ENCODE measurements at regions of chr1 and their contacts with region 1.

Region 1: GRCh38 chr1:78176448-78176847 is 130.7 kb downstream of the GIPC2 start:
- DNase-seq: peak; percentile 90
- ATAC-seq: peak; percentile 42
- H3K4me3 ChIP-seq: no peak overlapping the region
- H3K27ac ChIP-seq: peak overlapping the region; percentile 64
- H3K4me1 ChIP-seq: peaks cover 28% of the 10 kb centered on the region
- H3K27me3 ChIP-seq: no peaks in the 10 kb centered on the region
- CTCF ChIP-seq: no peak

Region 2: DNA sequence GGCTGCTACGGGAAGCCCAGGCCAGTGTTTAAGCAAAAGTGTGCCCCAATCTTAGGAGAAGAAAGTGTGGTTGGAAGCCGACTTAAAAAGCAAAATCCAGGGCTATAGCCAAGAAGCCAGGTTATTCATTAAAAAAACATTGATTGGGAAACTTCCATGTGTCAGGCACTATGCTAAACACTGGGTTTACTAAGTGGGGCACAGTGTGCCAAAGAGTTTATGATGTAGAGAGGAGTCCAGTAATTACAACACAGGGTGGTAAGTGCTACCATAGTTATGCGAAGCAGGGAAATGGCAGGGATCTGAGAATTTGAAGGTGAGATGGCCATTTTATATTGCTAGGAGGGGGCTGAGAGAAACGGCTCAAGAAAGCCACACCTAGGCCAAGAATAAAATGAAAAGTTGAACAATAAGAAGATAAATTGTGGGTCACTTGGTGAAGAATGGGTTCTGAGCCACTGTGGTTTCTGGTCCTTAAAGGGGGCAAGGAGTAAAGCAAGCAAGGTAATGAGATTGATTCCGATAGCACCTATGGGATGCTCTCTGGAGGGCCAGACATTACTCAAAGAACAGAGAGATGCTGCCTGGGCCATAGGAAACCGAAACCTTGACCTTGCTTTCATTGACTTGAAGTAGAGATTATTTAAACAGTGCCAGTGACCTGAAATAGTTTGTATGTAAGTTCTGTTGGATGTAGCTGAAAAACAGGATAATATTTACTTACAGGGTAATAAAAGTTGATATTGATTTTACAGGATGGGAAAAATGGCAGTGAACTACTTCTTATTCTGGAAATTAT is 47.2 kb after region 1 on chr1:
- CTCF ChIA-PET with region 1: no interaction called
- POLR2A ChIA-PET with region 1: no interaction called
- intact Hi-C with region 1: loop called (anchors 5 kb)
- DNase-seq: peak; percentile 15
- ATAC-seq: no peak
- H3K4me3 ChIP-seq: no peak overlapping the region
- H3K27ac ChIP-seq: no peak overlapping the region
- H3K4me1 ChIP-seq: peaks cover 14% of the 10 kb centered on the region
- H3K27me3 ChIP-seq: no peaks in the 10 kb centered on the region
- CTCF ChIP-seq: no peak

Region 3: DNA sequence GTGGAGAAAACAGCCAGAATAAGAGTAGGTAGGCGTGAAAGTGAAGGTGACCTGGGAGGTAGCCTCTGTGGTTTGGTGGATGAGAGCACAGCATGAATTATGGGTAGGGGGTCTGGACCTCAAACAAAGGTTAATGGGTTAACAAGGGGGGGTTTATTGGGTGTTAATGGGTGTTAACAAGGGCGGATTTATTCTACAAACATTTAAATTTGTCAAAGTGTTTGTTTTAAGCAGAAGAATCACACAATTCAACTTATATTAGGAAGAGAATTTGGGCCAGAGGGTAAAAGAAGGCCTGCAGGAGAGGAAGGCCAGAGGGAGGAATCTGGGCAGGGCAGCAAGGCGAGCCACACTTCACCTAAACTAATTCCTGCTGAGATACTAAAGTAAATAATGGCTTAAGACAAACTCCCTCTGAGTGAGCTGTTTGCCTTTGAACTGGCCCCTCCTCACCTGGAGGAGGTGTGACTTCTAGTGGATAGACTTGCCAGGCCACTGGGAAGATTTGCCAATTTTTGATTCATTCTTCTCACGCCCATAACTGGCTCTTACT is 61.0 kb after region 1 on chr1:
- CTCF ChIA-PET with region 1: no interaction called
- POLR2A ChIA-PET with region 1: interaction called, 4 read pairs
- intact Hi-C with region 1: loop called (anchors 1 kb)
- DNase-seq: peak; percentile 98
- ATAC-seq: peak; percentile 97
- H3K4me3 ChIP-seq: no peak overlapping the region
- H3K27ac ChIP-seq: peak overlapping the region; percentile 89
- H3K4me1 ChIP-seq: peaks cover 38% of the 10 kb centered on the region
- H3K27me3 ChIP-seq: no peaks in the 10 kb centered on the region
- CTCF ChIP-seq: no peak

Measured in PC-3 (cell line).